Natural killer cell (primary cell): ENCODE measurements at regions of chr1 and their contacts with region 1.

Region 1: DNA sequence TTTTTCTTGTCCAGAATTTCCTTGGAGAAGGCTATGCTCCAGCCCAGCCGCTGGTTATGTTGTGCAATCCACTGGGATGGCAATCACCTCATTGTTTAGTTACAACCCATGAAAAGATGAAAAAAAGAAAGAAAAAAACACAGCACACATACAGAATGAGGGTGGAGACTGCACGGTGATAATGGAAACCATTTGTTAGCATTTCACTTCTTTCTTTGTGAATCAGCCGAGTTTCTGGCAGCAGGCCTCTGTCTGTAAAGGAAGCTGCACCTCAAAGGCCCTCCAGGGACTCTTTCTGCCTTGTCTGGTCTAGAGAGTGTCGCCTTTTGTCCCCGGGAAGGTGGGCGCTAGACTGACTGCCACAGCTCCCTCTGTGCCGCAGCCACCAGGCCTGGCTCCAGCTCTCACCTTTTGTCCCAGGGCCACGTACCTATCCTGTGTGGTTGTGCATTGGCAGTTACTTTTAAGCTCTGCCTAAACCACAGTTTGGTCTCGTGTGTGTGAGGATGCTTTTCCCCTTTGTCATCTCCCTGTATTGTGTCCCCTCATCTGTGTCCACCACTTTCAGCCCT is 35.6 kb downstream of the NGF start:
- DNase-seq: no peak
- ATAC-seq: no peak
- H3K4me3 ChIP-seq: no peak overlapping the region
- H3K4me3 Mint-ChIP-seq: no peak overlapping the region
- H3K27ac ChIP-seq: no peak overlapping the region
- H3K27ac Mint-ChIP-seq: no peak overlapping the region
- H3K4me1 ChIP-seq: no peaks in the 10 kb centered on the region
- H3K4me1 Mint-ChIP-seq: no peaks in the 10 kb centered on the region
- H3K27me3 ChIP-seq: no peaks in the 10 kb centered on the region
- H3K27me3 Mint-ChIP-seq: peaks cover 5 to 13% of the 10 kb centered on the region in 2 donors
- CTCF ChIP-seq: no peak

Region 2: DNA sequence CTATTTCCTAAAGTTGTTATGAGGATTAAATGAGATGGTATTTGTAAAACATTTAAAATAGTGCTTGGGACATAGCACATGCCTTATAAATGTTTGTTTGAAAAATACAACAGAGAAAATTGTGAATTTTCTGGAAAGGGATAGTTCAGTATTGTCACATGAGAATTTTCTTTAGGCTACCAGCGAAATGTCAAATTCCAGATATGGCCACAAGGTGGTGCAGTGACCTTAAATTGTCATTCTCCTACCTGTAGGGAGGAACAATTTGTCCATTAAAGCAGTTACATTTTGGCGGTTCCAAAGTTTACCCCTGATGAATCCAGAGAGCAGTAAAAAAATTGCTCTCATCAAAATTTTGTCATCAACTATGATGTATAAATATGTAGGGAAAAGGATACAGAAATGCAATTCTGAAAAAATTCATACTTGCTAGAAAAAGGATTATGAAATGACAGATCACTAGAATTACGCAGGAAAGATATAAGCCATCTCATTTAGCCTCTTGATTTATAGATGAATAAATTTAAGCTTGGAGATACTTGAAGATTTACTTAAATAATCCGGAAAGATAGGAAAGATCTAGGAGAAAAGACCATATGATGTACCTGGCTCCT is 323.1 kb before region 1 on chr1:
- intact Hi-C with region 1: no loop called
- DNase-seq: peak; percentile 47 to 85
- ATAC-seq: peak; percentile 49 to 63 (median 57)
- H3K4me3 ChIP-seq: no peak overlapping the region
- H3K4me3 Mint-ChIP-seq: no peak overlapping the region
- H3K27ac ChIP-seq: no peak overlapping the region
- H3K27ac Mint-ChIP-seq: no peak overlapping the region
- H3K4me1 ChIP-seq: no peaks in the 10 kb centered on the region
- H3K4me1 Mint-ChIP-seq: no peaks in the 10 kb centered on the region
- H3K27me3 ChIP-seq: peaks cover 14% of the 10 kb centered on the region
- H3K27me3 Mint-ChIP-seq: peaks cover 26 to 31% of the 10 kb centered on the region in 2 donors
- CTCF ChIP-seq: peak; percentile 92

Region 3: GRCh38 chr1:115364046-115364775 is 61.7 kb after region 1 on chr1:
- intact Hi-C with region 1: loop called (anchors 10 kb)
- DNase-seq: no peak
- ATAC-seq: no peak
- H3K4me3 ChIP-seq: no peak overlapping the region
- H3K4me3 Mint-ChIP-seq: no peak overlapping the region
- H3K27ac ChIP-seq: no peak overlapping the region
- H3K27ac Mint-ChIP-seq: no peak overlapping the region
- H3K4me1 ChIP-seq: no peaks in the 10 kb centered on the region
- H3K4me1 Mint-ChIP-seq: no peaks in the 10 kb centered on the region
- H3K27me3 ChIP-seq: no peaks in the 10 kb centered on the region
- H3K27me3 Mint-ChIP-seq: peaks cover 0 to 3% of the 10 kb centered on the region in 2 donors
- CTCF ChIP-seq: no peak